Heart left ventricle (tissue), 16 donors: ENCODE measurements at regions of chrX and their contacts with region 1.

Region 1: GRCh38 chrX:151753313-151754041 is 18.9 kb downstream of the CNGA2 start:
- DNase-seq: peak; percentile 25 to 82 (median 48)
- ATAC-seq: peak; percentile 37 to 95 (median 90)
- H3K4me3 ChIP-seq: no peak overlapping the region
- H3K27ac ChIP-seq: no peak overlapping the region
- H3K4me1 ChIP-seq: peaks cover 0 to 3% (median 0%) of the 10 kb centered on the region in 12 donors
- H3K27me3 ChIP-seq: peaks cover 0 to 18% (median 0%) of the 10 kb centered on the region in 9 donors
- CTCF ChIP-seq: peak; percentile 63 to 85 (median 78)
- POLR2A ChIP-seq: no peak

Region 2: GRCh38 chrX:151929126-151929525 is 175.6 kb after region 1 on chrX:
- intact Hi-C with region 1: no loop called
- DNase-seq: no peak
- ATAC-seq: peak in 1 of 4 donors; percentile 48
- H3K4me3 ChIP-seq: no peak overlapping the region
- H3K27ac ChIP-seq: no peak overlapping the region
- H3K4me1 ChIP-seq: no peaks in the 10 kb centered on the region
- H3K27me3 ChIP-seq: no peaks in the 10 kb centered on the region
- CTCF ChIP-seq: no peak
- POLR2A ChIP-seq: no peak

Region 3: DNA sequence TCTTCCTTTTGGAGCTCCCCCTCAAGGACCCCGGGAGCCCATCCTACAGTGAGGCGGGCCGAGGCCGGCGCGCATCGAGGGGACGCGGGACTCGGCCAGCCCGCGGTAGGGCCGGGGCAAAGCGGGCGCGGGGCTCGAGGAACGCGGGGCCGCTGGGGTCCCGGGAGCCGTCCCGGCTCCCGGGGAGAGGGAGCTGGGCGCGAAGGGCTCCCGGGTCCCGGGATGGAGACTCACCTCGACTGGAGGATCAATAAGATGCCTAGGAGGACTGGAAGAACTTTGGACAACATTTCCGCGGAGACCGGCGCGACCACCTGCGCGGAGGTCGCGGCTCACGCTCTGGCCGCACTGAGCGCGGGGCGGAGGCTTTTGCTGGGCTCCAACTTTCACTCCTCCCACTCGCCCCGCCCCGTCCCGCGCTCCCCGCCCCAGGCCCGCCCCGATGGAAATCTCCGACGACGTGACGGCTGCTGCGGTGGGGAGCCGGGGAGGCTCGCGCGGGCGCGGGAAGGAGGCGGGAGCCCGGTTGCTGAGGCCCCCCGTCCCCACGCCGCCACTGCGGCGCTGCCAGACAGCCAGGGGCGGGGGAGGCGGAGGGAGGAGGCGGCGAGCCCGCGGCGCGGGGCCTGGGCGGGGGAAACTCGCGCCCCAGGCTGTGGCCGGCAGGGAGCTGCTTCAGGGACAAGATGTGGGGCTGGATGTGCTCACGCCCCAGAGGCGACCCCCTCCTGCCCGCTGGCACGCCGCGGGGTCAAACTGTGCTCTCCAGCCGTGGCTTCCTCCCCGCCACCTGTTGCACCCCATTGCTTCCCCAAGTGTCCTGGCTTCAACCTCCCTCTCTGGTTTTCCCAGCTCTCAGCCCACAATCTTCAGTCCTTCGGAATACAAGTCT is 221.1 kb after region 1 on chrX and contains the start of gene GABRE:
- intact Hi-C with region 1: loop called in 1 of 10 experiments (anchors 10 kb)
- DNase-seq: peak; percentile 57 to 79 (median 68)
- ATAC-seq: peak in 3 of 4 donors; percentile 81 to 85 (median 81)
- H3K4me3 ChIP-seq: peak within 1 kb of the TSS; percentile 39 to 78 (median 66)
- H3K27ac ChIP-seq: peak within 1 kb of the TSS in 11 of 12 donors; percentile 46 to 86 (median 82)
- H3K4me1 ChIP-seq: peaks cover 0 to 12% (median 0%) of the 10 kb centered on the region in 12 donors
- H3K27me3 ChIP-seq: peaks cover 0 to 15% (median 0%) of the 10 kb centered on the region in 9 donors
- CTCF ChIP-seq: no peak
- POLR2A ChIP-seq: peak in 1 of 2 donors; percentile 89
- total RNA-seq, gene GABRE: 18.2 to 52.9 (median 30.6) TPM

Region 4: DNA sequence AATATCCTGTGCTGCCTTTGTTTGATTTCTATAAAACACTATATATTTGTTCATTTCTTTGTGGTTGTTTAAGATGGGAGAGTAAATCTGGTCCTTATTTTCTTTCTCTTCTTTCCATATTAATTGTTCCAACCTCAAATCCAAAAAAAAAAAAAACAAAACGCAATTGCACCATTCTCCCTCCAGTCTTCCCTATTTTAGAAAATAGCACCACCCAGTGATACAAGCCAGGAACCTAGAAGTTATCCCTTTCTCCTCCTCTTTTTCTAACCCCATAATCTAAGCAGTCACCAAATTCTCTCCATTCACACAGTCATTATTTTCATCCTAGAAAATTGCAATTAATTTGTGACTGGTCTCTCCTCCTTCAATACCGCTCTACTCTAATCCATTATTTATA is 589.8 kb after region 1 on chrX:
- intact Hi-C with region 1: loop called in 7 of 10 experiments (anchors 5 to 10 kb)
- DNase-seq: no peak
- ATAC-seq: no peak
- H3K4me3 ChIP-seq: no peak overlapping the region
- H3K27ac ChIP-seq: no peak overlapping the region
- H3K4me1 ChIP-seq: no peaks in the 10 kb centered on the region
- H3K27me3 ChIP-seq: peaks cover 0 to 4% (median 0%) of the 10 kb centered on the region in 9 donors
- CTCF ChIP-seq: peak in 3 of 12 donors; percentile 12 to 27 (median 20)
- POLR2A ChIP-seq: no peak

Region 5: GRCh38 chrX:152821145-152821765 is 1067.8 kb after region 1 on chrX:
- intact Hi-C with region 1: loop called in 4 of 10 experiments (anchors 5 to 10 kb)
- DNase-seq: no peak
- ATAC-seq: no peak
- H3K4me3 ChIP-seq: no peak overlapping the region
- H3K27ac ChIP-seq: no peak overlapping the region
- H3K4me1 ChIP-seq: no peaks in the 10 kb centered on the region
- H3K27me3 ChIP-seq: peaks cover 0 to 26% (median 0%) of the 10 kb centered on the region in 9 donors
- CTCF ChIP-seq: peak in 11 of 12 donors; percentile 14 to 56 (median 36)
- POLR2A ChIP-seq: no peak